Endothelial cell of umbilical vein (primary cell): ENCODE measurements at regions of chr3 and their contacts with region 1.

Region 1: DNA sequence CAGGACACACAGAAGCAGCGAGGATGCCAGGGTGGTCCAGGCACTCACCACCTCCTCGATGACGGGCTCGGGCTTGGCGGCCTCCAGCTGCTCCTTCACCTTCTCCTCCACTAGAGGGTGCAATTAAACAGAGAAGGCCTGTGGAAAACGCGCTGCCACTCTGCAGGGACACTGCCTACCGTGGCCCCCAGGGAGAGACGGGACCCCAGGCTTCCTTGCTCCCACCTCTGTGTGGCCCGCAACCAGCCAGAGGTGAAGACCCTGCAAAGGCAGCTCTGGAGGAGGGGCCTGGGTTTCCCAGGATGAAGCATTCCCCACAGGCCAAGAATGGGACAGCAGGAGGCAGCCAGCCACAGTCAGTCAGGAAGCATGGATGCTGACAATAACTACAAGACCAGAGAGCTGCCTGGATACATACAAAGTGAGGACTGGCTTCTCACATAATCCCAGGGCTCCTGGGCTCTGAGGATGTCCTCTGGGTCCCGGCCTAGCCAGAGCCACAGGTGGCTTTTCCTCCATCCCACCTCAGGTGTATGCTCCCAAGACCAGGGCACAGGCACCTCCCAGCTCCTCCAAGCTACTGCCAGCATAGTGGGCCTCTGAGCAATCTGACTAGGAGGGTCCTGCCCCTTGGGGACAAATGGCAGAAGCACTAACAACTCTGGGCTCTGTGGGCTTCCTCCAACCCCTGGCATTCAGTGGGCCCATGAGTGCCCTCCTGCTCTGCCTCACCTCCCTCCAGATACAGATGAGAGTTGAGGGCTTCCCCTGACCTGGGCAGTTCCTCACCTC is 46.2 kb downstream of the PTH1R start:
- DNase-seq: peak; percentile 53
- H3K4me3 ChIP-seq: no peak overlapping the region
- H3K27ac ChIP-seq: no peak overlapping the region
- H3K4me1 ChIP-seq: peaks cover 19% of the 10 kb centered on the region
- H3K27me3 ChIP-seq: no peaks in the 10 kb centered on the region
- CTCF ChIP-seq: peak; percentile 69 to 79
- POLR2A ChIP-seq: no peak

Region 2: DNA sequence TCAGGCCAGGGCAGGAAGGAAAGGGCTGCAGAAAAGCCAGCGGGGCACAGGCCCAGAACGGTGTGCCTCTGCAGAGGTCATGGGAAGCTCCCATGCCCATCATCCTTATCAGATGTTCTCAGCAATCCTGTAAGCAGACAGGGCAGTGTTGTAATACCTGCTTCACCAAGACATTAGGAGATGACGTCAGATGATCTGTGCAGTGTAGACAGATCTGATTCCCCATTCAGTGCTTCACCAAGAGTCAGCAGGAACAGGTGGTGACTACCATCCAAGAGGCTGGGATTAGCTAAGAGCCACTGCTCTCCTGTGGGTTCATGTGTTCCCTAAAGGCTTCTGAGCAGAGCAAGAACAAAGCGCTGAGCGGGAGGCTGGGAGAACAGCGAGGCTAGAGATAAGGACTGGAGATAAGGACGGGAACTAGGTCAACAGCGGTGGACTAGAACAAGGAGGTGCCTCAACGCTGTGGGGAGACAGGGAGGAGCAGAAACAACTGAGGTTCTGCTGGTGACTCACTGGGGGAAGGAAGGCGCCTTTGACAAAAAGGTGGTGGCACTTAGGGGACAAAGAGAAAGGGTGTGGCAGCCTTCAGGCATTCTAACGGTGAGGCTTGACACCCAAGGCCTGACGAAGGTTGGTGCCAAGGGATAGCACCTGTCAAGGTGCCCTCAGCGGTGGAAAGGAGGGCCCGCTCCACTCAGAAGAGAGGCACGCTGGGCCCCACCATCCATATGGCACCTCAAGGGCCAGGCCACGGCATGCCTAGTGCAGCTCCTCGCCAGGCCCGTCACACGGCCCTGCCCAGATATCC is 24.4 kb after region 1 on chr3:
- CTCF ChIA-PET with region 1: interaction called, 15 read pairs
- POLR2A ChIA-PET with region 1: no interaction called
- dilution Hi-C with region 1: no loop called
- intact Hi-C with region 1: no loop called
- DNase-seq: peak; percentile 58
- H3K4me3 ChIP-seq: no peak overlapping the region
- H3K27ac ChIP-seq: peak overlapping the region; percentile 39
- H3K4me1 ChIP-seq: peaks cover 70% of the 10 kb centered on the region
- H3K27me3 ChIP-seq: no peaks in the 10 kb centered on the region
- CTCF ChIP-seq: no peak
- POLR2A ChIP-seq: no peak

Region 3: GRCh38 chr3:46970391-46971091 is 46.8 kb after region 1 on chr3:
- CTCF ChIA-PET with region 1: interaction called, 30 read pairs
- POLR2A ChIA-PET with region 1: no interaction called
- dilution Hi-C with region 1: no loop called
- intact Hi-C with region 1: no loop called
- DNase-seq: no peak
- H3K4me3 ChIP-seq: no peak overlapping the region
- H3K27ac ChIP-seq: no peak overlapping the region
- H3K4me1 ChIP-seq: peaks cover 30% of the 10 kb centered on the region
- H3K27me3 ChIP-seq: no peaks in the 10 kb centered on the region
- CTCF ChIP-seq: no peak
- POLR2A ChIP-seq: no peak

Region 4: DNA sequence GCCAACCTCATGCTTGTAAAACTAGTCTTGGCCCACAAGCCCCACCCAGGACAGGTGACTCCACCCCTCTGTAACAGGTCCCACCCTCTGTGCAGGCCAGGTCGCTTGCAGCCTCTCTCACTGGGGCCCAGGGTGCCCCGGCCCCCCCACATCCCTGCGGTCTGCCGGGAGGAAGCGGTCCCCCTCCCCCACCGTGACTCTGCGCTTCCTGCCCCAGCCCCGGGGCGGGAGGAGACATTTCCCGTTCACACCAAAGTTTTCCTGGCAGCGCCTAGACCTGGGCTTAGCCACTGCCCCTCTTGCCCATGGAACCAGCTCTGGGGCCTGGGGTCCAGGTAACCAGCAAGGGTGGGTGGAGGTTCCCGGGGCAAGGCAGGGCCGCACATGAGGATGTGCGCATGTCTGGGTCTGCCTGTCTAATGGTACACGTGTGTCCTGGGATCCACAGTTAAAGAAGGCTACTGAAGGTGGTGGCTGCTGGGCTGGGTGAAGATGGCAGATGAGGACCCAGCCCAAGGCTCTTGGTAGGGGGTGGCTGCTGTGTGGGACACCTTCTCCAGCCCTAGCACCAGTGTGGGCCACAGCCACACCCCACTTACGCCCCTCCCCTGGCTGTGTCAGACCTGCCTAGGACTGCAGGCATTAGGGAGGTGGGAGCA is 64.1 kb after region 1 on chr3:
- CTCF ChIA-PET with region 1: interaction called, 52 read pairs
- POLR2A ChIA-PET with region 1: no interaction called
- dilution Hi-C with region 1: no loop called
- intact Hi-C with region 1: no loop called
- DNase-seq: peak; percentile 65
- H3K4me3 ChIP-seq: no peak overlapping the region
- H3K27ac ChIP-seq: peak overlapping the region; percentile 77
- H3K4me1 ChIP-seq: peaks cover 21% of the 10 kb centered on the region
- H3K27me3 ChIP-seq: no peaks in the 10 kb centered on the region
- CTCF ChIP-seq: no peak
- POLR2A ChIP-seq: no peak

Region 5: GRCh38 chr3:47164007-47164881 is 240.5 kb after region 1 on chr3 and contains the start of gene SETD2:
- CTCF ChIA-PET with region 1: no interaction called
- POLR2A ChIA-PET with region 1: no interaction called
- dilution Hi-C with region 1: no loop called
- intact Hi-C with region 1: loop called (anchors 2 kb)
- DNase-seq: peak; percentile 90
- H3K4me3 ChIP-seq: peak within 1 kb of the TSS; percentile 58 to 97 (median 88)
- H3K27ac ChIP-seq: peak within 1 kb of the TSS; percentile 78
- H3K4me1 ChIP-seq: peaks cover 19% of the 10 kb centered on the region
- H3K27me3 ChIP-seq: no peaks in the 10 kb centered on the region
- CTCF ChIP-seq: peak in 1 of 2 donors; percentile 21
- POLR2A ChIP-seq: peak; percentile 31
- total RNA-seq, gene SETD2: 36.2 and 41.4 TPM in 2 replicates

Region 6: GRCh38 chr3:47365213-47366153 is 441.7 kb after region 1 on chr3:
- CTCF ChIA-PET with region 1: no interaction called
- POLR2A ChIA-PET with region 1: no interaction called
- dilution Hi-C with region 1: no loop called
- intact Hi-C with region 1: loop called (anchors 5 kb)
- DNase-seq: peak; percentile 80
- H3K4me3 ChIP-seq: no peak overlapping the region
- H3K27ac ChIP-seq: peak overlapping the region; percentile 25
- H3K4me1 ChIP-seq: peaks cover 17% of the 10 kb centered on the region
- H3K27me3 ChIP-seq: no peaks in the 10 kb centered on the region
- CTCF ChIP-seq: no peak
- POLR2A ChIP-seq: no peak